GM10248 (cell line): ENCODE measurements at regions of chr14 and their contacts with region 1.

Region 1: GRCh38 chr14:36591482-36591881 is 9.1 kb upstream of the NKX2-8 start:
- DNase-seq: no peak
- CTCF ChIP-seq: no peak

Region 2: DNA sequence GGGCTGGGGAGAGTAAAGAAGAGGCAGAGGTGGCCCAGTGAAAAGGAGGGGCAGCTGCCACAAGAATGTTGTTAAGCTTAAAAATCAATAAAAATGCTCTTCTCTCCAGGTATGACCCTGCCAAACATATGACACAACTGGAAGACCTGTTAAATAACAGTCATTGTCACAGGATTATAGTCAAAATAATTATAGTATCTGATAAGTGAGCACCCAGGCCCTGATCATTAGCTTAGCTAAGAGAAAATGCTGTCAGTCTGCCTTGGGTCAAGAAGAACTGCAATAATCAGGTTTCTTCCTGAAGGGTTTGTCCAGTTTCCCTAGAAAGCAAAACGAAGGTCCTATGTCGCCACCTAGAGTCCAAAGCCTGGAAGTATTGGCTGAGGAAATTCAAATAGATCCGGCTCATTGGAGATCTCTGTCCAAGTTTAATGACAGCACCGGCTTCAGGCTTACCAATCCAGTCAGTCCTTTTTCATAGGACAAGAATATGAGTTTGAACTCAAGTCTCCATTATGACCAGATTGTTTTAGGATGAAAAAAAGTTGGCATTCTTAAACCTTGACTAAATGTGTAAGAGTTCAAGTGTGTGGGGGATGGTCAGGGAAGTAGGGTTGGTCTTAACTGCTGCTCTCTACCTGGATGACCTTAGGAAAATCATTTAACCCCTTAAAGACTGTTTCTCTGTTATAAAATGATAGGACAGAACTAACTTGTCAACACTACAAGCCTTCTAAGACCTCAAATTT is 13.4 kb after region 1 on chr14:
- CTCF ChIA-PET with region 1: interaction called, 17 read pairs
- POLR2A ChIA-PET with region 1: no interaction called
- DNase-seq: peak; percentile 54
- CTCF ChIP-seq: peak; percentile 76

Region 3: GRCh38 chr14:36724162-36724561 is 132.7 kb after region 1 on chr14:
- CTCF ChIA-PET with region 1: no interaction called
- POLR2A ChIA-PET with region 1: no interaction called
- DNase-seq: no peak
- CTCF ChIP-seq: no peak